Caco-2 (cell line): ENCODE measurements at regions of chr12 and their contacts with region 1.

Region 1: GRCh38 chr12:51814311-51815088 is 34.0 kb downstream of the FIGNL2 start:
- DNase-seq: peak; percentile 83 to 93
- H3K4me3 ChIP-seq: peak overlapping the region; percentile 66
- H3K4me3 Mint-ChIP-seq: peak overlapping the region; percentile 67
- H3K27ac Mint-ChIP-seq: peak overlapping the region; percentile 9
- H3K4me1 ChIP-seq: peaks cover 11% of the 10 kb centered on the region
- H3K4me1 Mint-ChIP-seq: peaks cover 18% of the 10 kb centered on the region
- H3K27me3 ChIP-seq: no peaks in the 10 kb centered on the region
- H3K27me3 Mint-ChIP-seq: no peaks in the 10 kb centered on the region
- CTCF ChIP-seq: peak; percentile 62 to 85

Region 2: DNA sequence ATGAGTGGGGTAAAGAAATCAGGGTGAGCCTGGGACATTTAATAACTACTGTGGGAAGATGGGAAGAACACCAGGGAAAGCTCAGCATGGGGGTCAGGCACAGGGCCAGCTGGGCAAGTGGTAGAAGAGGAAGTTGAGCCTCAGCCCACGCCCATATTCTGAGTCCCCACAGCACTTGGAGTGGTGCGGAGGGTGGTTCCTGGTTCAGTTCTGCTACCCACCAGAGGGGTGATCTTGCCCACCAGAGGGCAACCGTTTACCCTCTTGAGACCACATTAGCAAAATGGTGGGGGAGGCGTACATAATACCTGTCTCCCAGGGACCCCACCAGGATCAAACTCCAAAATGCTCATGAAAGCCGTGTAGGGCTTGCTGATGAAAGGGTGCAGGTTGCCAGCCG is 56.6 kb after region 1 on chr12:
- CTCF ChIA-PET with region 1: interaction called, 22 read pairs
- POLR2A ChIA-PET with region 1: no interaction called
- intact Hi-C with region 1: no loop called
- DNase-seq: no peak
- H3K4me3 ChIP-seq: no peak overlapping the region
- H3K4me3 Mint-ChIP-seq: no peak overlapping the region
- H3K27ac Mint-ChIP-seq: no peak overlapping the region
- H3K4me1 ChIP-seq: peaks cover 16% of the 10 kb centered on the region
- H3K4me1 Mint-ChIP-seq: peaks cover 29% of the 10 kb centered on the region
- H3K27me3 ChIP-seq: no peaks in the 10 kb centered on the region
- H3K27me3 Mint-ChIP-seq: no peaks in the 10 kb centered on the region
- CTCF ChIP-seq: no peak